ENCODE measurements at regions of chr3 and their contacts with region 1.

Region 1: DNA sequence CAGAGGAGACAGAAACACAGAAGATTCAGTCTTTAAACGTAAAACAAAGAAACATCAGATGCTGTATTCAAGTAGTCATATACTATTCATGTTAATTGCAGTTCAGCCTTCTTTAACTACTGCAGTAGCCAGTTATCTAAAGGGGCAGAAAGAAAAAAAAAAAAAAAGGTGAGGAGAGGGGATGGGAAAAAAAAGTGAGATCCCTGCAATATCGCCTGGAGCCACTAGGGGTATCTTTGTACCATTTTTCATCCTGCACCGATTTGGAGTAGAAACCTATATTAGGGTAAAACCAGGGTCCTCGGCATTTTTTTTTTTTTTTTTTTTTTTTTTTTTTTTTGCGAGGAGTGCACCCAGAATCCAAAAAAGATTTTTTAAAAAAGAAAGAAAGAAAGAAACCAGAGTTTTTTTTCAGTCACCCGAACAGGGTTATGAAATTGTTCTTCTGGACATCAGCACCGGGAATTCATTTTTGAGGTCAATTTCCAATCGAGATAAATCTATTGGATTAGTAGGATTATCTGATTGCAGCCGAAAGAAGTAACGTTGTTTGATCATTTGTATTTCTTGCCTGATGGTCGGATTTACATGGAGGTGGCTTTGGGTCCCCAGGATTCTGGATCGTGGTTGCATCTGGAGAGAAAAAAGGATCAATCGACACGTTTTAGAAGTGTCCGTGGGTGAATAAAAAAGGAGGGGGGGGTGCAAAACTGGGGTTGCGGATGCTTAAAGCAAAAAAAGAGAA is 186.7 kb downstream of the NLGN1 start:
- DNase-seq: peak in 4 of 10 donors; percentile 15 to 60 (median 39)
- H3K4me3 ChIP-seq: peak overlapping the region; percentile 40 to 78 (median 65)
- H3K27ac ChIP-seq: peak overlapping the region in 54 of 59 donors; percentile 3 to 85 (median 76)
- H3K27me3 ChIP-seq: no peaks in the 10 kb centered on the region
- CTCF ChIP-seq: peak; percentile 59 to 85 (median 74)

Region 2: GRCh38 chr3:173395412-173396181 is 188.7 kb before region 1 on chr3:
- intact Hi-C with region 1: no loop called
- DNase-seq: peak; percentile 75 to 95 (median 91)
- H3K4me3 ChIP-seq: peak overlapping the region; percentile 51 to 90 (median 76)
- H3K27ac ChIP-seq: peak overlapping the region; percentile 78 to 98 (median 91)
- H3K27me3 ChIP-seq: no peaks in the 10 kb centered on the region
- CTCF ChIP-seq: peak in 30 of 56 donors; percentile 8 to 51 (median 28)

Region 3: DNA sequence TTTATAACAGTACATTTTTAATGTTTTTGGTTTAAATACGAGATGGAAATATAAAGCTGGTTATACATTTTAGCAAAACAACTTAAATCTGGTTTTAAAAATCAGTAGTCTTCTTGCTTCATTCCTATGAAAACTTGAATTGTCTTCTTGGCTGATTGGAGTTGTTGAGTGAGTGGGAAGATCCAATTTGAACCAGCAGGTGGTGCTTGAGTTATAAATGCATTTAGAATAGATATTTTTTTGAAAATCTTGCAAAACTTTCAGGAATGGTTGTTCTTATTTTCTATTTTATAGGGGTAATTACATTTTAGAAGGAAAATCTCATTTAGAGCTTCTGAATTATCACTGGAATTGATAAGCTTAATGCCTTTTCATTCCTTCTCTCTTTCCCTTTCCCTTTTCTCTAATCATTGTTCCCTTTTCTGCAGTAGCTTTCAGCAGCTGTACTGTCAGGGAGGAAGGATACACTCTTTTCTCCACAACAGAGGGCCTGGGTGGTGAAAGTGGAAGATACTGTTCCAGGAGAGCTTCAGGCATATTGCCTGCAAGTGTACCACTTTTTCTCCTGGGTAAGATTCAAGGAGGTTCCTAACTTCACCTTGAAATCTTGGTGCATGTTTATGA is 148.9 kb after region 1 on chr3:
- intact Hi-C with region 1: loop called in 1 of 2 experiments (anchors 10 kb)
- DNase-seq: peak in 1 of 10 donors; percentile 55
- H3K4me3 ChIP-seq: no peak overlapping the region
- H3K27ac ChIP-seq: peak overlapping the region in 7 of 59 donors; percentile 1 to 77 (median 21)
- H3K27me3 ChIP-seq: no peaks in the 10 kb centered on the region
- CTCF ChIP-seq: peak; percentile 47 to 77 (median 64)

Region 4: GRCh38 chr3:173993299-173993698 is 409.0 kb after region 1 on chr3:
- intact Hi-C with region 1: loop called in 1 of 2 experiments (anchors 10 kb)
- DNase-seq: no peak
- H3K4me3 ChIP-seq: peak overlapping the region in 7 of 59 donors; percentile 1 to 34 (median 22)
- H3K27ac ChIP-seq: peak overlapping the region in 4 of 59 donors; percentile 7 to 47 (median 20)
- H3K27me3 ChIP-seq: no peaks in the 10 kb centered on the region
- CTCF ChIP-seq: peak in 47 of 56 donors; percentile 17 to 66 (median 42)

Measured in dorsolateral prefrontal cortex (tissue), 120 donors.